ENCODE measurements at regions of chr11 and their contacts with region 1.

Region 1: DNA sequence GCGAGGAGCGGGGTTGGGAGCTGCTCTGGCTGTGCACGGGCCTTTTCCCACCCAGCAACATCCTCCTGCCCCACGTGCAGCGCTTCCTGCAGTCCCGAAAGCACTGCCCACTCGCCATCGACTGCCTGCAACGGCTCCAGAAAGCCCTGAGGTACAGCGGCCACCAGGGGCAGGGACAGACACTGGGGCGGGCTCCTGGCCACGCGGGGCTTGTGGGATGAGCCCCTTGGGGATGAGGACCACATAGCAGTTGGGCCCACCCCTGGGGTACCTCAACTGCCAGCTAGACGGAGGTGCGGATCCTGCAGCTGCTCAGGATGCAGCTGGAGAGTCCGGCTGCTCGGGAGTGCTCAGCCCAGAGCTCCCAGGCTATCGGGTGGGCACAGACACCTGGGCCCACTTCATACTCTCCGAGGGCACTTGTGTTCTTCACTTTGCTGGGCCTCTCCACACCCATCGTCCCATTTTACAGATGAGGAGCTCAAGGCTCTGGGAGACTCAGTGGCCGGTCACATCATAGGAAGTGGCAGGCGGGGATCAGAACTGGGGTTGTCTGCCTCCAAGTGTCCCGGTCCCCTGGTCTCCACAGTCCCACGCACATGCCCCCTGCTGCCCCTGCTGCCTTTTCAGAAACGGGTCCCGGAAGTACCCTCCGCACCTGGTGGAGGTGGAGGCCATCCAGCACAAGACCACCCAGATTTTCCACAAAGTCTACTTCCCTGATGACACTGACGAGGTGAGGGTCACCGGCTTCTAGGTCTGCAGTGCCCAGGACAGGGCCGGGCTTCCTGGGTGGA is 77.6 kb downstream of the MYO7A start:
- DNase-seq: no peak
- H3K4me3 ChIP-seq: no peak overlapping the region
- H3K27ac ChIP-seq: no peak overlapping the region
- H3K4me1 ChIP-seq: no peaks in the 10 kb centered on the region
- H3K27me3 ChIP-seq: no peaks in the 10 kb centered on the region
- CTCF ChIP-seq: no peak

Region 2: DNA sequence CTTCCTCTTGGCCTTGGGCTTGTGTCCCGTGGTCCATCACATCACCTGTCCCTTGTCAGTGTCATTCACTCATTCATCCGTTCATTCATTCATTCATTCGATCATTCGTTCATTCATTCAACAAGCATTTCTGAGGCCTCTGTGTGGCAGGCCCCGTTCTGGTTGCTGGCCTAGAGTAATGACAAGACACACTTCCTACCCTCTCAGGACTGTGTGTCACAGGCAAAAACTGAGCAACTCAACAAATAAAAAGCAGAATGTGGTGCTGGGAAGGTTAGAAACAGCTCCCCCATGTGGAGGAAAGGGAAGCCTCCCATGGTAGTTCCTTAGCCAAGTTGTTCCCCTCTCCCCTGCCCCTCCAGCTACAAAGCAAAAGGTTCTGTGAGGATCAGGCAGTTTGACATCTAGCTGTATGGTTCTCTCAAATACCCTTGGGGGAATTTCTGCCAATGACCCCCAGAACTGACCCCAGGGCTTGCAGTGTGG is 104.6 kb before region 1 on chr11:
- CTCF ChIA-PET with region 1: no interaction called
- dilution Hi-C with region 1: no loop called
- in situ Hi-C with region 1: no loop called
- intact Hi-C with region 1: no loop called
- DNase-seq: peak; percentile 23
- H3K4me3 ChIP-seq: no peak overlapping the region
- H3K27ac ChIP-seq: no peak overlapping the region
- H3K4me1 ChIP-seq: no peaks in the 10 kb centered on the region
- H3K27me3 ChIP-seq: no peaks in the 10 kb centered on the region
- CTCF ChIP-seq: peak; percentile 57 to 58

Region 3: DNA sequence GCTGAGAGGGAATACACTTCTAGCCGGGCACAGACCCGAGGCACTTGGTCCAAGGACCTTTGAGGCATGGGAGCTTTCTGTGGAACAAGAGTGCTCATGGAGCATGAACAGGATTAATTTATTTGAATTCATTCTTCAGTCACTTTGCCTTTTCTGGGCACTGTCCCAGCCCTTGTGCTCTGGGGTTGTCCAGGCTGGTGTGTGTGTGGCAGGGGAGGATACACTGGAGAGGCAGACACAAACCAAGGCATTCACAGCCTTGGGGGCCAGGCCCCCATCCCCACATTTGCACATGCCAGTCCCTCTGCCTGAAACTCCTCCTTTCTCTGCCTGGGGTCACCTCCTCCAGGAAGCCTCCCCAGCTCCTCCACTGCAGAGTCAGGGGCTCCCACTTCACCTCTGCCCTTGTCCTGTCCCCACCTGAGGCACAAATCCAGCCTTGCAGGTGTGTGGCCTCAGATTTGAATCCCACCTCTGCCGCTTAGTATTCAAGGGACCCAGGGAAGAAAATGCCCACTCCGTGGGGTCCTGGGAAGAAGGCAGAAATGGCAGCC is 22.2 kb before region 1 on chr11:
- CTCF ChIA-PET with region 1: no interaction called
- dilution Hi-C with region 1: no loop called
- in situ Hi-C with region 1: no loop called
- intact Hi-C with region 1: no loop called
- DNase-seq: no peak
- H3K4me3 ChIP-seq: no peak overlapping the region
- H3K27ac ChIP-seq: no peak overlapping the region
- H3K4me1 ChIP-seq: no peaks in the 10 kb centered on the region
- H3K27me3 ChIP-seq: peaks cover 2% of the 10 kb centered on the region
- CTCF ChIP-seq: no peak

Region 4: GRCh38 chr11:77479746-77480352 is 274.2 kb after region 1 on chr11:
- CTCF ChIA-PET with region 1: no interaction called
- dilution Hi-C with region 1: loop called (anchors 5 kb)
- in situ Hi-C with region 1: no loop called
- intact Hi-C with region 1: no loop called
- DNase-seq: no peak
- H3K4me3 ChIP-seq: no peak overlapping the region
- H3K27ac ChIP-seq: no peak overlapping the region
- H3K4me1 ChIP-seq: no peaks in the 10 kb centered on the region
- H3K27me3 ChIP-seq: no peaks in the 10 kb centered on the region
- CTCF ChIP-seq: no peak